ENCODE measurements at regions of chr4 and their contacts with region 1.

Region 1: DNA sequence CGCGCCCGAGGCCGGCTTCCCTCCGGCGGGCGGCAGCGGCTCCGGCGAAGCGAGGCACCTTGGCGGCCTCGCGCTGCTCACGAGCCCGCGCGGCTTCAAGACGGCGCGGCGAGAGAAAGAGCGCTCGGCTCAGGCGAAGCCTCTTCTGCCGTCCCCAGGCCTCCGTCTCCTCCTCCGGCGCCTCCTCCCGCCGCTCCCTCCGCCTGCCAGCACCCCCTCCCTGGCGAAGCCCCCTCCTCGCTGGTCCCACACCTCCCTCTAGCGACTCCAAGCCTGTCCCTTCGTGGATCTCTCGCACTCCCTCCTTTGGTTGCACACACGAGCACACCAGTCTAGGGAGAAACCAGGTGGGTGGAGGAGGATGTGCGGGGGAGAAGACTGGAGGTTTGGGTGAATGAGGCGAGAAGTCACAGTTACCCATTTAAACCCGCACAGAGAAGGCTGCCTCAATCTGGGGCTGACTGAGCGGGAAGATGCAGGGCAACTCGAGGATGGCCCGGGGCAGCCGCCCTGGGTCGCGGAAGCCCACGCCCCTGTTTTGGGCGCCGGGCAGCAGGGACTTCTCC is at the start of gene CAMK2D:
- DNase-seq: peak; percentile 88 to 91
- ATAC-seq: peak; percentile 74 to 90 (median 82)
- H3K4me3 ChIP-seq: peak within 1 kb of the TSS; percentile 70 to 89 (median 85)
- H3K27ac ChIP-seq: peak within 1 kb of the TSS; percentile 95 to 100 (median 98)
- H3K4me1 ChIP-seq: peaks cover 0 to 41% (median 32%) of the 10 kb centered on the region in 9 donors
- H3K27me3 ChIP-seq: no peaks in the 10 kb centered on the region
- CTCF ChIP-seq: peak; percentile 11 to 81 (median 63)
- total RNA-seq, gene CAMK2D: 173 to 286 (median 249) TPM

Region 2: GRCh38 chr4:113445286-113445685 is 316.4 kb before region 1 on chr4:
- intact Hi-C with region 1: loop called in 3 of 10 experiments (anchors 5 to 10 kb)
- DNase-seq: peak; percentile 24 to 57
- ATAC-seq: peak; percentile 69 to 93 (median 79)
- H3K4me3 ChIP-seq: no peak overlapping the region
- H3K27ac ChIP-seq: peak overlapping the region; percentile 30 to 73 (median 67)
- H3K4me1 ChIP-seq: peaks cover 4 to 65% (median 42%) of the 10 kb centered on the region in 9 donors
- H3K27me3 ChIP-seq: no peaks in the 10 kb centered on the region
- CTCF ChIP-seq: no peak

Region 3: DNA sequence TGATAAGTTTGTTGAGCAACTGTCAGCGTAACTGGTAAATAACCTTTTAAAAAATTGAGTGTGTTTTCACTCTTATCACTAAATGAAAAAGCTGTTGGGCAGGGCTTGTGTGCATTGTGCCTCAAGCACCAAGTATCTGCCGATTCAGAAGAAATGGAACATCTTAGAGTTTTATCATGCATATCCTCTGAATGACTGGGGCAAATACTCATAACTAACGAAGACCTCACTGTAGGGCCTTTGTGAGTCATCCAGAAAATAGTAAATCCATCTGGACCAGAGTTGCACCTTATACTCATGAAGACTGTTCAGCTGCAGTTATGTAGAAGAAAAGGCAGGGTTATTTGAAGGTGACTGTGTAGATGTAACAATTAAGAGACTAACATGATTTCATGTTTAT is 222.3 kb before region 1 on chr4:
- intact Hi-C with region 1: loop called in 2 of 10 experiments (anchors 2 to 10 kb)
- DNase-seq: no peak
- ATAC-seq: no peak
- H3K4me3 ChIP-seq: no peak overlapping the region
- H3K27ac ChIP-seq: peak overlapping the region in 6 of 10 donors; percentile 14 to 83 (median 78)
- H3K4me1 ChIP-seq: peaks cover 3 to 74% (median 44%) of the 10 kb centered on the region in 9 donors
- H3K27me3 ChIP-seq: no peaks in the 10 kb centered on the region
- CTCF ChIP-seq: no peak

Region 4: GRCh38 chr4:113555868-113556267 is 205.8 kb before region 1 on chr4:
- intact Hi-C with region 1: loop called in 1 of 10 experiments (anchors 2 kb)
- DNase-seq: peak; percentile 21 to 26
- ATAC-seq: peak; percentile 70 to 97 (median 89)
- H3K4me3 ChIP-seq: no peak overlapping the region
- H3K27ac ChIP-seq: peak overlapping the region; percentile 23 to 86 (median 79)
- H3K4me1 ChIP-seq: peaks cover 0 to 37% (median 26%) of the 10 kb centered on the region in 9 donors
- H3K27me3 ChIP-seq: no peaks in the 10 kb centered on the region
- CTCF ChIP-seq: no peak

Region 5: DNA sequence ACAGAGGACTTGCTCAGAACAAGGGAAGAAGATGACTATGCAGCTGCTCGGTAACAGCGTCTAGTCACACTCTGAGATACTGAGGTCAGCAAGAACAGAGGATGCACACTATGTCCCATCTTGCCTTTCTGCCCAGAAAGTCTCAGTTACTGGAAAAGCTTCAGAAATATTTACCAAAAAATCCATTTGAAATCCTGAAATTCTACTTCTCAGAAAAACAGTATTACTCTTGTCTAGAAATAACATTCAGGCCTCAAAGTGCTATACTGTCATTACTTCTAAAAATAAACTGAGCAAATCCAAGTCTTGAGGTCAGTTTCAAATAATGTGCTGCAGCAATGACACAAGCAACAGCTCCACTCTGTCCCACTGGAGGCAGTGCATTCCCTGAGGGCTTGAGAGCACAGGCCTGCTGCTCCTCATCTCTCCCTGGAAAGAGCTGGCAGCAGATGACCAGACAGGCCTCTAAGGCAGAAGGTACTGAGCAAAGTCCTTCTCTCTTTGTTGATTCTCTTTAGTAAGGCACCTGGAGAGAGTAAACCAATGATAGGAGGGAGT is 77.1 kb before region 1 on chr4:
- intact Hi-C with region 1: loop called in 6 of 10 experiments (anchors 2 to 10 kb)
- DNase-seq: peak; percentile 54 to 85
- ATAC-seq: peak; percentile 93 to 98 (median 94)
- H3K4me3 ChIP-seq: no peak overlapping the region
- H3K27ac ChIP-seq: peak overlapping the region; percentile 36 to 86 (median 74)
- H3K4me1 ChIP-seq: peaks cover 0 to 75% (median 52%) of the 10 kb centered on the region in 9 donors
- H3K27me3 ChIP-seq: no peaks in the 10 kb centered on the region
- CTCF ChIP-seq: peak in 8 of 9 donors; percentile 16 to 62 (median 44)

Measured in heart right ventricle (tissue), 16 donors.